ENCODE measurements at regions of chr16 and their contacts with region 1.

Region 1: GRCh38 chr16:53207810-53208752 is 153.3 kb downstream of the CHD9 start:
- DNase-seq: peak; percentile 54 to 93 (median 77)
- ATAC-seq: peak; percentile 84
- H3K4me3 ChIP-seq: peak overlapping the region; percentile 58
- H3K27ac ChIP-seq: peak overlapping the region; percentile 99
- H3K4me1 ChIP-seq: peaks cover 0 to 6% of the 10 kb centered on the region in 2 experiments; a peak in 2 of 5 replicates
- H3K27me3 ChIP-seq: no peaks in the 10 kb centered on the region
- CTCF ChIP-seq: peak; percentile 61 to 77 (median 71)
- EP300 ChIP-seq: 0 out of 2 replicates have a peak, but pooled peaks have one; percentile 38
- POLR2A ChIP-seq: peak; percentile 80
- RAD21 ChIP-seq: peak; percentile 68 to 77

Region 2: DNA sequence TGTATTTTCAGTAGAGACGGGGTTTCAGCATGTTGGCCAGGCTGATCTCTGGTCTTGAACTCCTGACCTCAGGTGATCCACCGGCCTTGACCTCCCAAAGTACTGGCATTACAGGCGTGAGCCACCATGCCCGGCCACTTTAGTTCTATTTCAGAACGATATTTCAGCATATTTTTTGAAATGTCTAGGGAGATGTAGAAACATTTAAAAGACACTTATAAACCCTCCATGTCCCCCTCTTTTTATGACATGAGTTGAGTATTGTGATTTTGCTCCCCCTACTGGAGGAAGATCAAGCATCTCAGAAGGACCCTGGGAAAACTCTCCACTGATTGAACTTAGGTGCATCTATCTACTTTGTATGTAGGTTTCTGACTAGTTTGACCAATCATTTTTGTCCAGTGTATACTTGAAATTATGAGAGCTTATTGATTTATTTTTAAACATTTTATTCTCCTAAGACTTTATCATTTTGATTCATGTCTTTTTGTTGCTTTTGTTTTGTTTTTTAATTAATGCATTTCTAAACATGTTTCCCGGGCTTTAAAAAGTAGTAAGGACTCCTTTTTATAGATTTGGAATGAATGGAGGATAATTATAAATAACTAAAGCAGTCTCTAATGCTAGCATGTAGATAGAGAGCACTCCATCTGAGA is 48.2 kb before region 1 on chr16:
- CTCF ChIA-PET with region 1: no interaction called
- POLR2A ChIA-PET with region 1: interaction called, 3 read pairs
- in situ Hi-C with region 1: no loop called
- intact Hi-C with region 1: loop called (anchors 5 kb)
- DNase-seq: peak; percentile 44 to 74 (median 49)
- ATAC-seq: peak; percentile 97
- H3K4me3 ChIP-seq: no peak overlapping the region
- H3K27ac ChIP-seq: no peak overlapping the region
- H3K4me1 ChIP-seq: no peaks in the 10 kb centered on the region
- H3K27me3 ChIP-seq: no peaks in the 10 kb centered on the region
- CTCF ChIP-seq: peak; percentile 37 to 75 (median 64); a peak in 5 of 6 replicates
- EP300 ChIP-seq: no peak
- POLR2A ChIP-seq: no peak
- RAD21 ChIP-seq: peak; percentile 47 to 63

Region 3: DNA sequence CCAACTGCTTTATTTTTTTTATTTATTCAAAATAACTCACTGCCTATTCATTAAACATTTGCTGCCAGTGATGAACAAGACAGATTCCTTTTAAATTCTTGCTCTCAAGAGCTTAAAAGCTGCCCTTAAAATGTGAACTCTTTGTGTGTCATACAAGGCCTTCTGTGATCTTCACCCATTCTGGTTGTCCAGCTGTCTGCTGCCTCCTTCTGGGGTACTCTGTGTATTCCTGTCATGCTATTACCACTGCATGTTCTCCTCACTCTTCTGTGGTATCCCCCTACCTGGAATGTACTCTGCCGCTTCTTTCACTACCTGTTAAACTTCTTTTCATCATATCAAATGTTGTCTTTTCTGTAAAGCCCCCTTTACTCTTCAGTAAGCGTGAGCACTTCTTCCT is 12.5 kb after region 1 on chr16:
- CTCF ChIA-PET with region 1: no interaction called
- POLR2A ChIA-PET with region 1: interaction called, 11 read pairs
- in situ Hi-C with region 1: no loop called
- intact Hi-C with region 1: no loop called
- DNase-seq: peak in 3 of 4 experiments; percentile 20 to 57 (median 33)
- ATAC-seq: peak; percentile 81
- H3K4me3 ChIP-seq: no peak overlapping the region
- H3K27ac ChIP-seq: no peak overlapping the region; the same call in 2 of the 3 replicates
- H3K4me1 ChIP-seq: peaks cover 7 to 38% of the 10 kb centered on the region in 2 experiments
- H3K27me3 ChIP-seq: no peaks in the 10 kb centered on the region
- CTCF ChIP-seq: peak; percentile 42 to 56 (median 51); a peak in 3 of 6 replicates
- EP300 ChIP-seq: no peak
- POLR2A ChIP-seq: no peak
- RAD21 ChIP-seq: peak; percentile 40 to 73

Region 4: DNA sequence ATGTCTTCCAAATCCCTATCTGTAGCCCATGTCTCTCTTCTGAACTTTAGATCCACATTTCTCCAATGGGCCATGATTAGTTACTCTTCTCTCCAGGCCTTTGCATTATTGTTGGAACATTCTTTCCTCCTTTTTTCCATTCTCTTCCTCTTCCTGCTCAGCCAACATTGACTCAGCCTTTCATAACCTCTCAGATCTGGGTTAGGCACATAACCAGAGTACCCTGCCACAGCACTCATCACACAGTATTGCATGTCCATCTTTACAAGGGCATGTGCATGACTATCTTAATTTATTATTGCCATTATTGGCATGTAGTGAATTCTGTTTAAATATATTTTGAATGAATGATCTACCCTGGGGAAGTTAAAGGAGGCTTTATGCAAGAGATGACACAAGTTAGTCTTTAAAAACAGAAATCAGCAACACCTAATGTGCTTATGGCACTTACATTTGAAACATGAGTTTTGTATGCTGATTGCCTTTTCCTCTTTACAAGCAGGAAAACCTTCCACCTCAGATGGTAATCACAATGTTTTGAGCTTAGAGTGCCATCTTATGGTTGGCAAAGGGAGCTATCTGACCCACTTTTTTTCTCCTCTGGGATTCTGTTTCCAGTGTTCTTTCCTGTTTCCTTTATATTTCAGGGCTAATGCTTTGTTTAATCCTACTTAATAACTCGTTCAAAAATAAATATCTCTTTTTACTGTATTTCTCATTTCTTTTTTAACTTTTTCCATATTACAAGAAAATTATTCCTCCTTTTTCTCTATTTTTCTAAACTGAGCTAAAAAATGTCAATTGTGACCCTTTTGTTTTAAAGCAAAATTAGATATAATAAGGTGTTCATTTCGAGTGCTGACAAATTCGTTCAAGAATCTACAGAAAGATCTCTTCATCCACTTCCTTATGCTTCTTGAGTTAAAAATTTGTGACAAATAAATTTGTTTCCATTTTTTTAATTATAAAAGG is 75.2 kb after region 1 on chr16:
- CTCF ChIA-PET with region 1: no interaction called
- POLR2A ChIA-PET with region 1: no interaction called
- in situ Hi-C with region 1: no loop called
- intact Hi-C with region 1: no loop called
- DNase-seq: peak in 2 of 4 experiments; percentile 21 to 22
- ATAC-seq: no peak
- H3K4me3 ChIP-seq: no peak overlapping the region
- H3K27ac ChIP-seq: no peak overlapping the region
- H3K4me1 ChIP-seq: no peaks in the 10 kb centered on the region
- H3K27me3 ChIP-seq: no peaks in the 10 kb centered on the region
- CTCF ChIP-seq: peak in 2 of 3 experiments; percentile 37 to 44; a peak in 3 of 6 replicates
- EP300 ChIP-seq: no peak
- POLR2A ChIP-seq: no peak
- RAD21 ChIP-seq: peak; percentile 11 to 53; a peak in 2 of 4 replicates